ENCODE measurements at regions of chr1 and their contacts with region 1.

Region 1: DNA sequence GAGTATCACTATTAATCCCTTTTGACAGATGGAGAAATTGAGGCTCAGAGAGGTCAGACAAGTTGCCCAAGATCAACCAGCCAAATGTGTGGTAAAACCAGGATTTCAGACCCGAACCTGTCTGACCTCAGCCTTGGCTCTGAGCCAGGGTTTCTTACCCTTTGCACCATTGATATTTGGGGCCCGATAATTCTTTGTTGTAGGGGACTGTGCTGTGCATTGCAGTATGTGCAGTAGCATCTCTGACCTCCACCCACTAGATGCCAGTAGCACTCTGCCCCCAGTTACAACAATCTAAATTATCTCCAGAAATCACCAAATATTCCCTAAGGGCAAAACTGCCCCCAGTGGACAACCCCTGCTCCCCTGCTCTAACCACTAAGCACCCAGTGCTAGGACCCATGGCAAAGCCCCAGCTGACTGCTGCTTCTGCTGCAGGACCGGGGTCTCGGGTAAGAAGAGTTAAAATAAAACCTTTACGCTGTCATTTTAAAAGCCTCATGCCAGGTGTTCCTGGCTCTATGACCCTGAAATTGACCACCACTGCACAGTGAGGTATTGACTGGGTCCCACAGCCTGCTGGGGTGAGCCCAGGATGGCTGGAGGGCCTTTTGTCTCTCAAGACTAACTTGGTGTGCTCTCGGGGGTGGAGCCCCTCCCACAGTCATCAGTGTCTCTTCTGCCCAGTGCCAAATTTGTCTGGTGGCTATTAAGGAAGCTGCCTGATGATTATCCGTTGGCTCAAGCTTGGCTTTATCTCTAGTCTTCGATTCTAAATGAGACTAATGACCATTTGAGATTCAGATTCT is 5.6 kb upstream of the MAN1C1 start:
- DNase-seq: no peak
- ATAC-seq: no peak

Region 2: GRCh38 chr1:25799935-25800702 is 189.1 kb after region 1 on chr1 and contains the start of gene SELENON:
- intact Hi-C with region 1: loop called (anchors 5 kb)
- DNase-seq: peak; percentile 80
- ATAC-seq: peak; percentile 64
- total RNA-seq, gene SELENON: 53.8 TPM